Naive thymus-derived CD4-positive, alpha-beta T cell (primary cell): ENCODE measurements at regions of chr19 and their contacts with region 1.

Region 1: DNA sequence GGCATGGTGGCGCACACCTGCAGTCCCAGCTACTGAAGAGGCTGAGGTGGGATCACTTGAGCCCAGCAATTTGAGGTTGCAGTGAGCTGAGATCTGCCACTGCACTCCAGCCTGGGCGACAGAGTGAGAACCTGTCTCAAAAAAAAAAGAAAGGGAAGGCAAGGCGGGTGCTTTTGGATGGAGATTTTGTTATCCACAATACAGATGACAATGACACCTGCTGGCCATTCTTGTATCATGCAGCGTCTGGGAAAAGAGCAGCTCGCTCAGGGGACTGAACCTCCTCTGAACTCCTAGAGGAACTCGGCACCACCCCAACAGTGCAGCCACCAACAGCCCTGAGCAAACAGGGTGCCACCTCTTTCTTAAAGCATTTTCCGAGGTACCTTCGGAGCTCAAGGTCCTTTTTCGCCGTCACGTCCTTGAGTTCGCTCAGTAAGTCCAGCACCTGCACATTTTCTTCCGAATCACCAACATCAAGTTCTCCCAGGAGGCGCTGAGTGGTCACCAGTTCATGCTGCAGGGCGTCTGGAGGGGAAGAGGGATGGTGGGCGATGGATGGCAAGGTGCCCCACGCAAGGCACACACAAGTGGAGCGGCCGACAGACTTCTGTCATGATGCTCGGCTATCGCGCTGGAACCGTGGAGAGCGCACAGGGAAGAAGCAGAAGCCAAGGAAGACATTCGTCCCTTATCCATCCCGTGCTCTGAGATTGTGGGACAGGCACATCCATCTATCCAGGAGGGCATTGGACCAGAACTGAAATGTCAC is 22.6 kb downstream of the HAUS8 start:
- DNase-seq: peak in 6 of 9 donors; percentile 19 to 49 (median 34)
- ATAC-seq: peak; percentile 67
- H3K4me3 ChIP-seq: no peak overlapping the region
- H3K4me3 Mint-ChIP-seq: no peak overlapping the region
- H3K27ac ChIP-seq: no peak overlapping the region
- H3K27ac Mint-ChIP-seq: peak overlapping the region in 1 of 9 donors; percentile 19
- H3K4me1 ChIP-seq: no peaks in the 10 kb centered on the region
- H3K4me1 Mint-ChIP-seq: peaks cover 0 to 2% (median 0%) of the 10 kb centered on the region in 7 donors
- H3K27me3 ChIP-seq: no peaks in the 10 kb centered on the region
- H3K27me3 Mint-ChIP-seq: no peaks in the 10 kb centered on the region

Region 2: DNA sequence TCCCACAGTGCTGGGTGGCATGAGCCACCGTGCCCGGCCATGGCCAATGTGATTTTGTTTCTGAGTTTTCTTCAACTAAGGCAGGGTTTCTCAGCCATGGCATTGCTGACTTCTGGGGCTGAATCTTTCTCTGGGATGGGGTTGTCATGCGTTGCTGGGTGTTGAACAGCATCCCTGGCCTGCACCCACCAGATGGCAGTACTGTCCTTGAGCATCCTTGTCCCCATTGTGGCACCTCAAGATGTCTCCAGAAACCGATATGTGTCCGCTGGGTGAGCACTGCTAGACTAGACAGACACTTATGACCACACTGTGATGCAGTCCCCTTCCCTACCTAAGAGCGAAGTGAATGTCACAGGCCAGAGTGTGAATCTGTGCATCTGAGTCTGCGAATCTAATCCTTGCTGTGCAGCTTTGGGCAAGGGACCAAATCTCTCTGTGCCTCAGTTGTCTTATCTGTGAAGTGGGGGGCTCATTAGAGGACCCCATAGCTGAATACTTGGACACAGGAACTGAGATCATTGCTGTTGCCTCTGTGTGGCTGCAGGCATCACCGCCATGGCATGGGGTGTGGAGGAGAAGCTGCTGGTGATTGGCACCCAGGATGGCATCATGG is 273.7 kb before region 1 on chr19:
- CTCF ChIA-PET with region 1: interaction called, 7 read pairs
- POLR2A ChIA-PET with region 1: no interaction called
- intact Hi-C with region 1: loop called (anchors 1 to 2 kb)
- DNase-seq: peak in 8 of 9 donors; percentile 10 to 41 (median 36)
- ATAC-seq: peak; percentile 82
- H3K4me3 ChIP-seq: no peak overlapping the region
- H3K4me3 Mint-ChIP-seq: no peak overlapping the region
- H3K27ac ChIP-seq: no peak overlapping the region
- H3K27ac Mint-ChIP-seq: no peak overlapping the region
- H3K4me1 ChIP-seq: no peaks in the 10 kb centered on the region
- H3K4me1 Mint-ChIP-seq: no peaks in the 10 kb centered on the region
- H3K27me3 ChIP-seq: no peaks in the 10 kb centered on the region
- H3K27me3 Mint-ChIP-seq: peaks cover 2 to 25% (median 13%) of the 10 kb centered on the region in 5 donors